Calu3 (cell line): ENCODE measurements at regions of chr4 and their contacts with region 1.

Region 1: GRCh38 chr4:26081795-26082498 is 167.9 kb downstream of the SMIM20 start:
- DNase-seq: peak; percentile 21
- H3K4me3 Mint-ChIP-seq: no peak overlapping the region
- H3K27ac Mint-ChIP-seq: no peak overlapping the region
- H3K4me1 Mint-ChIP-seq: peaks cover 25% of the 10 kb centered on the region
- H3K27me3 Mint-ChIP-seq: peaks cover 12% of the 10 kb centered on the region
- CTCF ChIP-seq: peak; percentile 17

Region 2: GRCh38 chr4:26161030-26161824 is 79.3 kb after region 1 on chr4:
- CTCF ChIA-PET with region 1: interaction called, 4 read pairs
- intact Hi-C with region 1: loop called (anchors 2 kb)
- DNase-seq: peak; percentile 2
- H3K4me3 Mint-ChIP-seq: no peak overlapping the region
- H3K27ac Mint-ChIP-seq: no peak overlapping the region
- H3K4me1 Mint-ChIP-seq: no peaks in the 10 kb centered on the region
- H3K27me3 Mint-ChIP-seq: no peaks in the 10 kb centered on the region
- CTCF ChIP-seq: no peak

Region 3: DNA sequence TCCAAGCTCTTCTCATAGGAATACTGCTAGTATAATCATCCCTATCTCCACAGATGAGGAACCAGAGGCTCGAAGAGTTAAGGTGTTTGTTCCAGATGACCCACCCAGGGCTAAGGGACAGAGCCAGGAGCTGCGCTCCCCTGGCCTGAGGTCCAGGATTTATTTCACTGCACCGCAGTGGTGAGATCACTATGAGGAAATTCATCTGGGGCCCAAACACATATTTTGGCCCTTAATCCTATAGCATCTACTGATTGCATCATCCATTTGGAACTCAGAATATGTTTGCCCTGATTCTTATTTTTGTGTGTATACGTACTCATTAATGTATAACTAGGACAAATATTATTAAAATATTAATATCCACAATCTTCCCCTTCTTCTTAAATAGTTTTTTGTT is 138.8 kb after region 1 on chr4:
- CTCF ChIA-PET with region 1: no interaction called
- intact Hi-C with region 1: loop called (anchors 5 kb)
- DNase-seq: peak; percentile 31
- H3K4me3 Mint-ChIP-seq: peak overlapping the region; percentile 61
- H3K27ac Mint-ChIP-seq: peak overlapping the region; percentile 80
- H3K4me1 Mint-ChIP-seq: peaks cover 34% of the 10 kb centered on the region
- H3K27me3 Mint-ChIP-seq: peaks cover under 1% of the 10 kb centered on the region
- CTCF ChIP-seq: no peak

Region 4: GRCh38 chr4:26325191-26325590 is 243.2 kb after region 1 on chr4:
- CTCF ChIA-PET with region 1: interaction called, 8 read pairs
- intact Hi-C with region 1: loop called (anchors 2 kb)
- DNase-seq: peak; percentile 9
- H3K4me3 Mint-ChIP-seq: no peak overlapping the region
- H3K27ac Mint-ChIP-seq: peak overlapping the region; percentile 55
- H3K4me1 Mint-ChIP-seq: peaks cover 11% of the 10 kb centered on the region
- H3K27me3 Mint-ChIP-seq: no peaks in the 10 kb centered on the region
- CTCF ChIP-seq: no peak